Mammary epithelial cell (primary cell): ENCODE measurements at regions of chr16 and their contacts with region 1.

Region 1: DNA sequence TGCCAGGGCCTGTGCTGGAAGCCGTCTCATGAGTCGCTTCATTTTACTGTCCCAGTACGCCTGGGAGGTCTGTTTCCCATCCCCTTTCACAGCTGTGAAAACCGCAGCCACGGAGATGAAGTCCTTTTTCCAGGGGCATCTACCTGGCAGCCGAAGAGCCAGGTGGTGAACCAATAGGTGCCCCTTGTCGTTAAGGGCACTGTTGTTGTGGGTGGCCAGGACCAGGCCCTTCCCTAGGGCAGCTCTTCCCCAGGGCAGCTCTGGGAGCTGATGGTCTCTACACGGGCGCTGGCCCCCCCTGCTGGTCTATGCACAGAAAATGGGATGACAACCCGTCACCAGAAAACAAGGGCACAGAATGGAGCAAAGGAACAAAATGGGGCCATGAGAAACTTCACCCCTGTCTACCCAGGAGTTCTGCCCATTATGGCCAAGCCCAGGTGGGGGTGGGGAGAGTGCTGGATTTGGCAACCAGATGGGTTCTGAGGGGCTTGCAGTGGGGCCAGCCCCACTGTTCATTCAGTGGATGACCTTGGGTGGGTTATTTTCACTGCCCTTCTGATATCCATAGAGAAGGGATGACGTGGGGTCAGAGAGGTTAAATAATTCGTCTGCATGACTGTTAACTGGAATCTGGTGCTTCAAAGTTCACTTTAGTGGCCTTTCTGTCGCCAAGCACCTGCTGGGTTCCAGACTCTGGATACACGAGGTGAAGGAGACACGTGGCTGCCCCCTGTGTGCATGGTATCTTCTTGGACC is 11.5 kb downstream of the RMI2 start:
- DNase-seq: no peak
- H3K4me3 ChIP-seq: no peak overlapping the region
- H3K27ac ChIP-seq: peak overlapping the region; percentile 47
- H3K4me1 ChIP-seq: peaks cover 27% of the 10 kb centered on the region
- H3K27me3 ChIP-seq: no peaks in the 10 kb centered on the region
- CTCF ChIP-seq: peak; percentile 27 to 55

Region 2: DNA sequence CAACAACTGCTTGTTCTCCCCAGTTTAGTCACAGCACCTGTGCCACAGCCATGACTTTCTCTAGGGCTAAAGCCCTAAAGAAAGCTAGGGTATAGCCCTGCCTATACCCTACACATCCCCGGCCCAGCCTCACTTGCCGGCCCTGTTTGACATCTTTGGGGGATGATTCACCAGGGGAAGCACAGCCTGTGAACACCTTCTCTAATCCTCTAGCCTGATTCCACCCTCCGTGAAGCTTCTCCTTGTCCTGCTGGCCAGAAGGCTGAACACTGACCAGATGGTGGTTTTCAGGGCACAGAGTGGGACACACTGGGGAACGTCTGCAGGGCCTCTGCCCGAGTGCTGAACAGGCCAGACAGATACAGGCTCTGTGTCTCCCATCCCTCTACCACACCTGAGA is 406.4 kb before region 1 on chr16:
- CTCF ChIA-PET with region 1: no interaction called
- dilution Hi-C with region 1: loop called (anchors 5 kb)
- in situ Hi-C with region 1: no loop called
- intact Hi-C with region 1: no loop called
- DNase-seq: peak; percentile 72
- H3K4me3 ChIP-seq: no peak overlapping the region
- H3K27ac ChIP-seq: peak overlapping the region; percentile 8
- H3K4me1 ChIP-seq: peaks cover 52% of the 10 kb centered on the region
- H3K27me3 ChIP-seq: no peaks in the 10 kb centered on the region
- CTCF ChIP-seq: no peak

Region 3: DNA sequence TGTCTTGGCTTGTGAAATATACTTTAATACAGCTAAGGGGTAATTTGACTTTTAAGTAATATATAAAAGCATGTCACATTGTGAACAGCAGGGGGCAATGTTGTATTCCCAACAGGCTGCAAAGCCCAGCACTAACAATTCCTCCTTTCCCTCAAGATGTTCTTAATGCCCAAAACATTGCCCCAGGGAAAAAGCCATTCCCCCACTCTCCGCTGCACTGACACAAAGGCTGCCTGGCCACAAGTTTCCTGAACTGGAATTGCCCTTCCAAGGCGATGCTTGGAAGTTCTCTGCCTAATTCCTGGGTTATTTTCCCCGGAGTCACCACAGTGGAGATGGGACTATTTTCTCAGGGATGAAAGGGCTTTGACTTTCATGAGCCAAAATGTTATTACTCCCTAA is 385.2 kb before region 1 on chr16:
- CTCF ChIA-PET with region 1: no interaction called
- dilution Hi-C with region 1: no loop called
- in situ Hi-C with region 1: no loop called
- intact Hi-C with region 1: loop called (anchors 1 kb)
- DNase-seq: peak; percentile 69
- H3K4me3 ChIP-seq: no peak overlapping the region
- H3K27ac ChIP-seq: no peak overlapping the region
- H3K4me1 ChIP-seq: peaks cover 7% of the 10 kb centered on the region
- H3K27me3 ChIP-seq: no peaks in the 10 kb centered on the region
- CTCF ChIP-seq: peak; percentile 65 to 72

Region 4: GRCh38 chr16:10981697-10982216 is 375.0 kb before region 1 on chr16:
- CTCF ChIA-PET with region 1: no interaction called
- dilution Hi-C with region 1: loop called (anchors 10 kb)
- in situ Hi-C with region 1: no loop called
- intact Hi-C with region 1: no loop called
- DNase-seq: peak; percentile 22
- H3K4me3 ChIP-seq: no peak overlapping the region
- H3K27ac ChIP-seq: no peak overlapping the region
- H3K4me1 ChIP-seq: peaks cover 16% of the 10 kb centered on the region
- H3K27me3 ChIP-seq: no peaks in the 10 kb centered on the region
- CTCF ChIP-seq: peak; percentile 42 to 63

Region 5: DNA sequence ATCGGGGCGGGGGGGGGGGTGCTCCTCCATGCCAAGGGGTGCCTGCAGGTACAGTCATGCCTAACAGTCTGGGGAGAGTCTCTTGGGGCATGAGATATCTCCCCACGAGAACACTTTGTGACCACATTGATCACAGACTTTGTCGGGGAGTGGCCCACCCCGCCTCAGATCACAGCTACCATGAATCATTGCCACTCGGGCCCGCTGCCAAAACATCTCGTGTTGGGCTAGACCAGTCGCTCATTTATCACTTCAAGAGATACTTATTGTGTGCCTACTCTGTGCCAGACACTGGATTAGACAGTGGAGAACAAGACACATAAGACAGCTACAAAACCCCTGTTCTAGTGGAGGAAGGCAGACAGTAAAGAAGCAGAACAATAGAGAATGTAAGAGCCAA is 339.8 kb before region 1 on chr16:
- CTCF ChIA-PET with region 1: no interaction called
- dilution Hi-C with region 1: loop called (anchors 10 kb)
- in situ Hi-C with region 1: no loop called
- intact Hi-C with region 1: no loop called
- DNase-seq: peak; percentile 93
- H3K4me3 ChIP-seq: no peak overlapping the region
- H3K27ac ChIP-seq: peak overlapping the region; percentile 66
- H3K4me1 ChIP-seq: peaks cover 31% of the 10 kb centered on the region
- H3K27me3 ChIP-seq: no peaks in the 10 kb centered on the region
- CTCF ChIP-seq: no peak

Region 6: GRCh38 chr16:11278681-11279628 is 77.8 kb before region 1 on chr16:
- CTCF ChIA-PET with region 1: no interaction called
- dilution Hi-C with region 1: loop called (anchors 5 kb)
- in situ Hi-C with region 1: no loop called
- intact Hi-C with region 1: no loop called
- DNase-seq: no peak
- H3K4me3 ChIP-seq: no peak overlapping the region
- H3K27ac ChIP-seq: no peak overlapping the region
- H3K4me1 ChIP-seq: no peaks in the 10 kb centered on the region
- H3K27me3 ChIP-seq: no peaks in the 10 kb centered on the region
- CTCF ChIP-seq: no peak

Region 7: DNA sequence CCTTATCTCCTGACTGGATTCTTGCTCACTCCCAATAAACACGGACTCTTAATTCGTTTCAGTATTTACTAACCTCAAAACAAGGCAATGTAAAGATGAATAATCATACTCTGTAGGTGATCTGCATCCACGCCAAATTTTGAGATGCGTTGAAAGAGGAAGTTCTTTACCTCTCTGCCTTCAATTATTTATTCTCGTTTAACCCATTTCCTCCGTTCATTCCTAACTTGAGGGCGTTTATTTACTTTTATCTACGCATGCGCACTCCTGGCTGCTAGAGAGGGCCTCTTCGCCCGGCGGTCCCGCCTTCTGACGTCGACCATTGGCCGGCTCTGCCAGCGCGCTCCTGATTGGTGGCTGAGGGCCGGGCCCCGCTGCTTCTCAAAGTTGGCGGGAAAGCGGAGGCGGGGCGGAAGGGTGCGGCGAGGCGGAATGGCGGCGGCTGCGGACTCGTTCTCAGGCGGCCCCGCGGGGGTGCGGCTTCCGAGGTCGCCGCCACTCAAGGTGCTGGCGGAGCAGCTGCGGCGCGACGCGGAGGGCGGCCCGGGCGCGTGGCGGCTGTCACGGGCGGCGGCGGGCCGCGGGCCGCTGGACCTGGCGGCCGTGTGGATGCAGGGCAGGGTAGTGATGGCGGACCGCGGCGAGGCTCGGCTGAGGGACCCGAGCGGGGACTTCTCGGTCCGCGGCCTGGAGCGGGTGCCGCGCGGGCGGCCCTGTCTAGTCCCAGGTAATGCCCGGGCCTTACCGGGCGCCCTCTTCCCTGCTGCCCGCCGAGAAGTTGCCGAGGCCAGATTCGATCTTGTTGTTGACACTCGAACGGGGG is 11.5 kb before region 1 on chr16 and contains the start of gene RMI2:
- CTCF ChIA-PET with region 1: no interaction called
- dilution Hi-C with region 1: no loop called
- in situ Hi-C with region 1: no loop called
- intact Hi-C with region 1: loop called (anchors 1 kb)
- DNase-seq: peak; percentile 93
- H3K4me3 ChIP-seq: peak within 1 kb of the TSS; percentile 63 to 73 (median 67)
- H3K27ac ChIP-seq: peak within 1 kb of the TSS; percentile 33
- H3K4me1 ChIP-seq: peaks cover 8% of the 10 kb centered on the region
- H3K27me3 ChIP-seq: no peaks in the 10 kb centered on the region
- CTCF ChIP-seq: no peak
- total RNA-seq, gene RMI2: 2.2 to 14.7 TPM